Cardiac septum (tissue), 1 donor: ENCODE measurements at regions of chr6 and their contacts with region 1.

Region 1: DNA sequence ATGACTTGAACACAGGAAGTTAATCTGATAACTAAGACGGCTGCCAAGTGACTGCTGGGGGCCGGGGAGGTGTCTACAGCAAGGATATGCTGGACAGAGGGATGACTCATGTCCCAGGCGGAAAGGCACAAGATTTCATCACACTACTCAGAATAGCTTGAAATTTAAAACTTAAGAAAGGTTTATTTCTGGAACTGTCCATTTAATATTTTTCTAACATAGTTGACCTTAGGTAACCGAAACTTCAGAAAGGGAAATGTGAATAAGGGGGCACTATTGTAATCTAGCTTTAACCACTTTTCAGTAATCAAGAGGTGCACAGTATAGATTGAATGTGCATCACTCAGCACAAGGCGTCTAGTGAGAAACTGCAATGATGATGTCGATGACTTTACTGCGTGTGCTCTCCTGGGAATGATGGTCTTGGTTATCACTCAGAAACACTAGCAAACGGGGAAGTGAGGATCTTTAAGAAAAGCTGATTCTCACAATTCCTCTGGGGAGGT is 171.5 kb downstream of the QKI start:
- DNase-seq: no peak

Region 2: GRCh38 chr6:163945808-163946207 is 359.8 kb after region 1 on chr6:
- intact Hi-C with region 1: loop called (anchors 5 kb)
- DNase-seq: no peak